BJ (cell line): ENCODE measurements at regions of chr15 and their contacts with region 1.

Region 1: GRCh38 chr15:89822951-89823711 is 8.5 kb upstream of the ANPEP start:
- DNase-seq: no peak
- H3K4me3 ChIP-seq: no peak overlapping the region
- H3K27me3 ChIP-seq: no peaks in the 10 kb centered on the region
- CTCF ChIP-seq: no peak

Region 2: GRCh38 chr15:89781891-89782618 is 41.1 kb before region 1 on chr15:
- CTCF ChIA-PET with region 1: interaction called, 5 read pairs
- POLR2A ChIA-PET with region 1: interaction called, 11 read pairs
- DNase-seq: no peak
- H3K4me3 ChIP-seq: no peak overlapping the region
- H3K27me3 ChIP-seq: no peaks in the 10 kb centered on the region
- CTCF ChIP-seq: no peak

Region 3: GRCh38 chr15:90031231-90031791 is 208.2 kb after region 1 on chr15:
- CTCF ChIA-PET with region 1: no interaction called
- POLR2A ChIA-PET with region 1: no interaction called
- DNase-seq: no peak
- H3K4me3 ChIP-seq: no peak overlapping the region
- H3K27me3 ChIP-seq: no peaks in the 10 kb centered on the region
- CTCF ChIP-seq: no peak

Region 4: GRCh38 chr15:90833026-90833425 is 1009.9 kb after region 1 on chr15:
- CTCF ChIA-PET with region 1: no interaction called
- POLR2A ChIA-PET with region 1: interaction called, 12 read pairs
- DNase-seq: no peak
- H3K4me3 ChIP-seq: no peak overlapping the region
- H3K27me3 ChIP-seq: no peaks in the 10 kb centered on the region
- CTCF ChIP-seq: no peak